Mammary epithelial cell (primary cell): ENCODE measurements at regions of chr13 and their contacts with region 1.

Region 1: GRCh38 chr13:29266261-29266660 is 329.2 kb downstream of the SLC7A1 start:
- DNase-seq: no peak
- H3K4me3 ChIP-seq: no peak overlapping the region
- H3K27ac ChIP-seq: no peak overlapping the region
- H3K4me1 ChIP-seq: no peaks in the 10 kb centered on the region
- H3K27me3 ChIP-seq: no peaks in the 10 kb centered on the region
- CTCF ChIP-seq: no peak

Region 2: DNA sequence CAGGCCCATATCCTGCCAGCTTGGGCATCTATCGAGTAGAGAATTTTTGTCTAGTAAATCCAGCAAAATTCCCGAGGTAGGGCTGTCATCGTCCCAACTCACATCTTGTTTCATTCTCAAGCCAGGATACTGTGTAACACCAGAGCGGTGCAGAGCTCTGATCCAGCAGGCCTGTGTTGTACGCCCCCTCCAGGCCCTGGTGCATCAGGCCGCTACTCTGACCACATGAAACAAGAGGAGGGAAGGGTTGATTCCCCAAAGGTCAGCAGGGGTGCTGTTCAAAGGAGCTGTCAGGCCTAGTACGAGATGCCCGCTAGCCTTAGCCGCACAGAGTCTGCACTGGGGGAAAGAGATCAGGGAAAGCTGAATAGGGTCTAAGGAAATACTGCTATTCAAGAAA is 53.2 kb after region 1 on chr13:
- CTCF ChIA-PET with region 1: no interaction called
- dilution Hi-C with region 1: loop called (anchors 5 kb)
- in situ Hi-C with region 1: no loop called
- intact Hi-C with region 1: no loop called
- DNase-seq: no peak
- H3K4me3 ChIP-seq: no peak overlapping the region
- H3K27ac ChIP-seq: no peak overlapping the region
- H3K4me1 ChIP-seq: no peaks in the 10 kb centered on the region
- H3K27me3 ChIP-seq: no peaks in the 10 kb centered on the region
- CTCF ChIP-seq: no peak